Caki2 (cell line): ENCODE measurements at regions of chr9 and their contacts with region 1.

Region 1: GRCh38 chr9:72952914-72953313 is at the start of gene ALDH1A1:
- DNase-seq: peak; percentile 76
- total RNA-seq, gene ALDH1A1: 936 and 953 TPM in 2 replicates

Region 2: GRCh38 chr9:72695365-72695764 is 257.5 kb before region 1 on chr9:
- in situ Hi-C with region 1: no loop called
- DNase-seq: no peak

Region 3: GRCh38 chr9:72856972-72857623 is 95.8 kb before region 1 on chr9:
- in situ Hi-C with region 1: loop called (anchors 25 kb)
- DNase-seq: peak; percentile 69